Psoas muscle (tissue), 8 donors: ENCODE measurements at regions of chr15 and their contacts with region 1.

Region 1: GRCh38 chr15:89358755-89359439 is 24.3 kb upstream of the POLG start:
- DNase-seq: peak; percentile 73 to 84
- ATAC-seq: peak; percentile 87 to 97 (median 94)
- H3K4me3 ChIP-seq: peak overlapping the region; percentile 58
- H3K27ac ChIP-seq: no peak overlapping the region
- H3K4me1 ChIP-seq: peaks cover 7% of the 10 kb centered on the region
- H3K27me3 ChIP-seq: peaks cover 0 to 96% (median 28%) of the 10 kb centered on the region in 3 donors
- CTCF ChIP-seq: peak; percentile 99

Region 2: GRCh38 chr15:89299896-89300295 is 59.0 kb before region 1 on chr15:
- intact Hi-C with region 1: no loop called
- DNase-seq: no peak
- ATAC-seq: no peak
- H3K4me3 ChIP-seq: no peak overlapping the region
- H3K27ac ChIP-seq: no peak overlapping the region
- H3K4me1 ChIP-seq: no peaks in the 10 kb centered on the region
- H3K27me3 ChIP-seq: no peaks in the 10 kb centered on the region
- CTCF ChIP-seq: peak; percentile 39

Region 3: DNA sequence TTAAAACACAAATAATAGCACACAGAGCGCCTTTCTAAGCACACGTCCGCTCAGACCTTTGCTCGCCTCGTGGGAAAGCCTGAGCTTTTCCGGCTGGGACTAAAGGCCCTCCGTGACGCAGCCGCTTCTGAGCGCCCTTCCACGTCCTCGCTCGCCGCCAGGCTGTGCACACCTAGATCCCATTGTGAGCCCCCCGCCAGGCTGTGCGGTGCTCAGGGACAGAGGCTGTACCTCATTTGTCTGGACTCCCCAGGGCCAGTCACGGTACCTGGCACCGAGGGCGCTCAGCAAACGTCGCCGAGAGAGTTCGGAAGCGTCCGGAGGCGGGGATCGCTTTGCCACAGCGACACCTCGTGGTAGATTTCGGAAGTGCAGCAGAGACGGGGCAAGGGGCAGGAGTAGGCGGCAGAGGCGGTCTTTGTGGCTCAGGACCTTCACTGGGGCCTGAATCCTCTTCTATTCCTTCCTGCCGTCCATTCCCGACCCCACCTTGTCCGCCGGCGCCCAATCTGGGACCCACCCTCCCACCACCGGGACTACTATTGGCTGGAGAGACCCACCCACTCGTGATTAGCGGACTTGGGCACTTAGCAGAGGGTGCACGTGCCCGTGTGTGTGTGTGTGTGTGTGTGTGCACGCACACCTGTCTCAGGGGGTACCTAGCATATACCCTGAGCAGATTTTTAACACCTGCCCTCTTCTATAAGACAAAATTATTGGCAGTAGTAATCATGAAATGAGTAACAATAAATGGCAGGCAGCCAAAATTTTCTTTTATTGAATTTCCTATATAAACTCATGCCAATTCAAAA is 71.8 kb after region 1 on chr15:
- intact Hi-C with region 1: loop called (anchors 1 to 2 kb)
- DNase-seq: peak; percentile 84 to 92
- ATAC-seq: peak; percentile 93 to 99 (median 98)
- H3K4me3 ChIP-seq: peak overlapping the region; percentile 65
- H3K27ac ChIP-seq: no peak overlapping the region
- H3K4me1 ChIP-seq: peaks cover 8% of the 10 kb centered on the region
- H3K27me3 ChIP-seq: peaks cover 0 to 7% (median 2%) of the 10 kb centered on the region in 3 donors
- CTCF ChIP-seq: peak; percentile 98

Region 4: GRCh38 chr15:89472785-89473256 is 113.9 kb after region 1 on chr15:
- intact Hi-C with region 1: loop called in 1 of 2 experiments (anchors 5 kb)
- DNase-seq: no peak
- ATAC-seq: peak in 2 of 4 donors; percentile 37 to 68
- H3K4me3 ChIP-seq: no peak overlapping the region
- H3K27ac ChIP-seq: no peak overlapping the region
- H3K4me1 ChIP-seq: no peaks in the 10 kb centered on the region
- H3K27me3 ChIP-seq: peaks cover 0 to 64% (median 16%) of the 10 kb centered on the region in 3 donors
- CTCF ChIP-seq: peak; percentile 39

Region 5: GRCh38 chr15:89556413-89557262 is 197.7 kb after region 1 on chr15:
- intact Hi-C with region 1: loop called in 1 of 2 experiments (anchors 10 kb)
- DNase-seq: no peak
- ATAC-seq: peak in 2 of 4 donors; percentile 54 to 56
- H3K4me3 ChIP-seq: no peak overlapping the region
- H3K27ac ChIP-seq: no peak overlapping the region
- H3K4me1 ChIP-seq: no peaks in the 10 kb centered on the region
- H3K27me3 ChIP-seq: peaks cover 0 to 13% (median 0%) of the 10 kb centered on the region in 3 donors
- CTCF ChIP-seq: peak; percentile 74